AG04449 (cell line): ENCODE measurements at regions of chr11 and their contacts with region 1.

Region 1: DNA sequence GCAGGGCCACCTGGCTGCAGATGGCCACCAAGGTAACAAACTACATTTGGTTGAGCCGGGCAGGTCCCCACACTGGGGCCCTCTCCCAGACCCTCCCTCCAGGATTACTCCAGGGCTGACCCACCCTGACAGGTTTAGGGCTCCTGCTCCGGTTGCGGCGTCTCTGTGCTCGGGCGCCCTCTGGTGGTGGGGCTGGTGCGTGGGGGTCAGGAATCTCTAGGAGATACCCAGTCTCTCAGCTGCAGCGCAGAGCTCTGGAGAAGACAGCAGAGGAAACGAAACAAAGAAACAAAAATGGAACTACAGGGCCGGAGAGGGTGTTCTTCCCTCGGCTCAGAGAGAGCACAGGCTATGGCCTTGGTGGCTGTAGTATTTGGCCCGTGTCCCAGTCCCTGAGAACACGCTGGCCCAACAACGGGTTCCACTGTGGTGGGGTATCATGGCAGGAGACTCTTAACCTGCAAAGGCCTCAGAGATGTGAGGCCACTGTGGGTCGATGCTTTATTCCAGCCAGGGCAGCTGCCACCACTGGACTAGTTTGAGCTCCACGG is 2.4 kb downstream of the C11orf96 start:
- DNase-seq: no peak
- H3K4me3 ChIP-seq: peak overlapping the region; percentile 62
- CTCF ChIP-seq: peak; percentile 84

Region 2: GRCh38 chr11:43579171-43579918 is 365.5 kb before region 1 on chr11:
- CTCF ChIA-PET with region 1: no interaction called
- POLR2A ChIA-PET with region 1: no interaction called
- DNase-seq: no peak
- H3K4me3 ChIP-seq: peak overlapping the region; percentile 61
- CTCF ChIP-seq: peak; percentile 75

Region 3: GRCh38 chr11:43895601-43896000 is 49.2 kb before region 1 on chr11:
- CTCF ChIA-PET with region 1: interaction called, 180 read pairs
- POLR2A ChIA-PET with region 1: no interaction called
- DNase-seq: no peak
- H3K4me3 ChIP-seq: no peak overlapping the region
- CTCF ChIP-seq: no peak

Region 4: DNA sequence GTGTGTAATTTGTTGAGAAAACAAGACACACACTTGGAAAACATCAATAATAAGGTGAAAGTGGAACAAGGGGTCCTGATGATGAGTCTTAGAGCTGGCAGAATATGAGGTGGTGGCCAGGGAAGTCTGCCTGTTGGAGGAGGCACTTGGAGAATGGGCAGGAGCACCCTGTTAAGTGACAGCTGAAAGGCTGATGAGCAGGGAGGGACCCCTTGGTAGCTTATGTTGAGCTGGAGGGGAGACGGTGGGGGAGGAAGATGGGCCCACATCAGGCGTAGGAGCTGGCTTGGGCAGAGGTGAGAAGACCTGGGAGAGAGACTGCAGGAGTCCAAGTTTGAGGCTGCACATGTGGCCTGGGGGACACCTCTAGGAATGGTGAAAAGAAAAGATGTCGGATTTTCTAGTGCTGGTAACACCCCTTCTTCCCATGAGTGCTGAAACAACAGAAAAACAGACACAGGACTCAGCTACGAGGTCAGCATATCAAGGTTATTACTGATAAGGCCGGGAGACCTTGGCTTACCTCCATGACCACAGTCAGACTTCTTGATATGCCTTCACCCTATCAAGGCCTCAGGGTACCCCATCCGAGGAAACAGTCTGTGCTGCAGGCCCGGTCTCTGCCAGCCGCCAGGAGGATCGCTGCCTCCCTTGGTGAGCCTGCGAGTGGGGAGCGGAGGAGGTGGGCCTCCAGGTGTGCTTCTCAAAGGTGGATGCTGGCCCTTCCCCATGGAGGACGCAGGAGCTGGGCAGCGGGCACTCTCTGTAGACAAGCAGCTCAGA is 16.7 kb before region 1 on chr11:
- CTCF ChIA-PET with region 1: interaction called, 14 read pairs
- POLR2A ChIA-PET with region 1: interaction called, 27 read pairs
- DNase-seq: no peak
- H3K4me3 ChIP-seq: no peak overlapping the region
- CTCF ChIP-seq: no peak

Region 5: DNA sequence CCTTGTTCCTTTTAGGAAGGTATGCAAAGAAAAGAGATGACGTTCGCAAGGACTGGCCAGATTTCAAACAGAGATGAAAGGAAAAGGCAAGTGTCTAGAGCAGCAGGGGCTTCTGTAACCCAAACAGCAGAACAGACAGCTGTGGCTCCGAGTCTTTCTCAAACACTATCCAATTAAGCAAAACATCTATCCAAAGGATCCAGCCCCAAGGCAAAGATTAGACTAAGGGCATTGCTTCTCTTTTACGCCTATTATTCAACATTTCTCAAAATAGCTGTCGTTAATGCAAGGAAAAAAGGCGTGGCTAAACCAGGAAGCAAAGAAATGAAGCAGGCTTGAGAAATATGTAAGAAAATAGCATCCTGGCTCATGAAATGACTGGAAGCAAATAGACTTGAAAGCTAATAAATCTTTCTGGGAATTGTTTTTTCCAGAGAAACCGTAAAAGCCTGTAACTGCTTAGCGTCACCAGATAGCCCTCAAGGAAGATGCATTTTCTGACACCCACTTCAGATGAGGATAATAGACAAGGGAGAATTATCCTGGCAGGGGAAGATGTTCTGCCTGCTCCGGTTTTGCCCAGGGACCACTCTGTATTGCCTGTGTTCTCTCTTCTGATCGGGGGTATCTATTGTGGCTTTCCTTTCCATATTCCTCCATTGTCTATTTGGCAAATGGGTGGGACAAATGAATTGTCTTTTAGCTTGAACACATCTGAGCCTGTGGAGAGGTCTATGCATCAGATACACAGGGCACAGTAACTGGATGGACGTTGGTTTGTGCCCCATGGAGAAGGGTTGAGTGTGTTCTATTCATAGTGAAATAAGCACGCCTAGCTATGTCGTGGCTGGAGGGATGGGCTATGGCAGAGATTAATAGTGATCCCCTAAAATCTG is 17.8 kb after region 1 on chr11:
- CTCF ChIA-PET with region 1: interaction called, 88 read pairs
- POLR2A ChIA-PET with region 1: interaction called, 3 read pairs
- DNase-seq: no peak
- H3K4me3 ChIP-seq: no peak overlapping the region
- CTCF ChIP-seq: no peak

Region 6: DNA sequence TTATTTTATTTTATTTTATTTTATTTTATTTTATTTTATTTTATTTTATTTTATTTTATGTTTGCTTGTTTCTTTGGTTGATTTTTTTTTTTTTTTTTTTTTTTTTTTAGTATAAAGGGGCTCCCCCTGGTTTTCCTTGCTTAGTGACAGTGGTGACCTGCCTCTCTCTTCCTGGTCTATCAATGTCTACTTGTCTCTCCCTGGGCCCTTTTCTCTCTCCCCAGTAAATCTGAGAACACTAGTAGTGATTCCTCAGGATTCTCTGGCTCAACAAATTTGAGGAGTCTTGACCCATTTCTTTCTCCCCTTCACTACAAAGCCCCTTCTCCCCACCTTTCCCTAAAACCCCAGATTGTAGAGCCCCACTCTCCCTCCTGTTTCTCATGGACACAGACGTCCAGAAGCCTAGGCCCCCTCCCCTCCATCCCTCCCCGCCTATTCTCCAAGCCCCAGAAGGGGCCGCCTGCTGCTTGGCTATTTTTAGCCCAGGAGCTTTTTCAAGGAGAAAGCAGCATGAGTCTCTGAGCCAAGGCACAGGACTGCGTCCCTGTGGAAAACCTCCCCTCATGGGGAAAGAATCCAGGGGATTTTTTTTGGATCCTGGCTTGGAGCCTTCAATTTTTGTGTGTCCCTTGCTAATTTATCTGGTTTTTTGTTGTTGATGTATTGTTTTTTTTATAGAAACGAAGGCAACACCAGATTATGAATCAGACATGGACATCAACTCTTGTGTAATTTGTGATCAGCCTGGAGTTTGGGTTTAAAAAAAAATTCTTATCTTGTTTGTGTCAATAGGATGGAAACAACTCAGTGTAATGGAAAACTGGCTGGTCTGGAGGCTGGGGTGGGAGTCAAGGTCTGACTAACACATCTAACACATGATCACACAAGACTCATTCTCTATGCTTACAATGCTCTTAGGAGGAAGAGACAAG is 85.4 kb after region 1 on chr11:
- CTCF ChIA-PET with region 1: interaction called, 10 read pairs
- POLR2A ChIA-PET with region 1: interaction called, 15 read pairs
- DNase-seq: no peak
- H3K4me3 ChIP-seq: no peak overlapping the region
- CTCF ChIP-seq: no peak